ENCODE measurements at regions of chr11 and their contacts with region 1.

Region 1: GRCh38 chr11:103659206-103659618 is 377.2 kb upstream of the DDI1 start:
- DNase-seq: peak; percentile 37
- H3K4me3 ChIP-seq: no peak overlapping the region
- H3K27ac ChIP-seq: no peak overlapping the region
- H3K4me1 ChIP-seq: peaks cover 5% of the 10 kb centered on the region
- H3K27me3 ChIP-seq: no peaks in the 10 kb centered on the region
- CTCF ChIP-seq: peak; percentile 30 to 40
- POLR2A ChIP-seq: no peak

Region 2: GRCh38 chr11:103257360-103257759 is 401.9 kb before region 1 on chr11:
- CTCF ChIA-PET with region 1: interaction called, 3 read pairs
- POLR2A ChIA-PET with region 1: no interaction called
- dilution Hi-C with region 1: no loop called
- intact Hi-C with region 1: loop called (anchors 1 kb)
- DNase-seq: peak; percentile 60
- H3K4me3 ChIP-seq: no peak overlapping the region
- H3K27ac ChIP-seq: no peak overlapping the region
- H3K4me1 ChIP-seq: no peaks in the 10 kb centered on the region
- H3K27me3 ChIP-seq: no peaks in the 10 kb centered on the region
- CTCF ChIP-seq: peak in 1 of 2 donors; percentile 32
- POLR2A ChIP-seq: no peak

Region 3: GRCh38 chr11:103326070-103326794 is 333.0 kb before region 1 on chr11:
- CTCF ChIA-PET with region 1: no interaction called
- POLR2A ChIA-PET with region 1: no interaction called
- dilution Hi-C with region 1: no loop called
- intact Hi-C with region 1: loop called (anchors 1 kb)
- DNase-seq: peak; percentile 77
- H3K4me3 ChIP-seq: no peak overlapping the region
- H3K27ac ChIP-seq: no peak overlapping the region
- H3K4me1 ChIP-seq: peaks cover 8% of the 10 kb centered on the region
- H3K27me3 ChIP-seq: no peaks in the 10 kb centered on the region
- CTCF ChIP-seq: peak; percentile 67 to 74
- POLR2A ChIP-seq: no peak

Region 4: DNA sequence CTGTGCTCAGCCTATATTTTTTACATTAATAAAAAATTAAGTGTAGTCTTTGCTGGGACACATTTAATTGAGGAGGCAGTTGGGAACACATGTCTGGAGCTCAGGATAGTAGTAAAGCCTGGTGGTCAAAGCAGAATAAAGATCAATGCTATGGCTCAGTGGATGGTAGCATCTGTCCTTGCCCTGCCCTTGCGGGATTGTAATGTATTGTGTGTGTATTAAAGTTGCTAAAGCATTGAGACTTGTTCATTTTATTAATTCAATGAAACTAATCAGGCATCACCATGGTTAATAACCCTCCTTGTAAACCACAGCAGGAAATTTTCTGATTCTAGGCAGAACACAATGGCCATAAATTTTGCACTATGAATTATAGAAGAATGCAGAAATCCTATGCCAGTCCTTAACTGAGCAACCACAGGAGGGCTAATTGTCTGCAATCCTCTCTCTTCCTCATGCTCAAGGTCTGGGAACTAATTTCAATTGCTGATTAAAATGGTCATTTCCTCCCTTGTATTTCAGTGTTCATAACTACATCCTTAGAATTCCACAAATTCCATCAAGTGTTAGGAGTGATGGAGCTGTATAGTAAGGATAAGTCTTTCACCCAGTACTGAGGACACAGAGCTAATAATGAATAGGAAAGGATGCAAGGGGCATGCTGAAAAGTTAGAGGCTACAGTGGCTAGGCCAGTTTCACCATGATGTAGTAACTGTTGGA is 26.0 kb before region 1 on chr11:
- CTCF ChIA-PET with region 1: no interaction called
- POLR2A ChIA-PET with region 1: no interaction called
- dilution Hi-C with region 1: no loop called
- intact Hi-C with region 1: loop called (anchors 1 kb)
- DNase-seq: peak; percentile 81
- H3K4me3 ChIP-seq: no peak overlapping the region
- H3K27ac ChIP-seq: peak overlapping the region; percentile 97
- H3K4me1 ChIP-seq: peaks cover 42% of the 10 kb centered on the region
- H3K27me3 ChIP-seq: no peaks in the 10 kb centered on the region
- CTCF ChIP-seq: peak in 1 of 2 donors; percentile 27
- POLR2A ChIP-seq: no peak

Region 5: GRCh38 chr11:103700622-103701021 is 41.4 kb after region 1 on chr11:
- CTCF ChIA-PET with region 1: no interaction called
- POLR2A ChIA-PET with region 1: no interaction called
- dilution Hi-C with region 1: no loop called
- intact Hi-C with region 1: no loop called
- DNase-seq: no peak
- H3K4me3 ChIP-seq: no peak overlapping the region
- H3K27ac ChIP-seq: no peak overlapping the region
- H3K4me1 ChIP-seq: no peaks in the 10 kb centered on the region
- H3K27me3 ChIP-seq: no peaks in the 10 kb centered on the region
- CTCF ChIP-seq: no peak
- POLR2A ChIP-seq: no peak

Region 6: GRCh38 chr11:103768816-103769215 is 109.6 kb after region 1 on chr11:
- CTCF ChIA-PET with region 1: no interaction called
- POLR2A ChIA-PET with region 1: no interaction called
- dilution Hi-C with region 1: no loop called
- intact Hi-C with region 1: no loop called
- DNase-seq: no peak
- H3K4me3 ChIP-seq: no peak overlapping the region
- H3K27ac ChIP-seq: no peak overlapping the region
- H3K4me1 ChIP-seq: no peaks in the 10 kb centered on the region
- H3K27me3 ChIP-seq: no peaks in the 10 kb centered on the region
- CTCF ChIP-seq: no peak
- POLR2A ChIP-seq: no peak

Measured in endothelial cell of umbilical vein (primary cell).